Colonic mucosa (tissue), 4 donors: ENCODE measurements at regions of chr5 and their contacts with region 1.

Region 1: DNA sequence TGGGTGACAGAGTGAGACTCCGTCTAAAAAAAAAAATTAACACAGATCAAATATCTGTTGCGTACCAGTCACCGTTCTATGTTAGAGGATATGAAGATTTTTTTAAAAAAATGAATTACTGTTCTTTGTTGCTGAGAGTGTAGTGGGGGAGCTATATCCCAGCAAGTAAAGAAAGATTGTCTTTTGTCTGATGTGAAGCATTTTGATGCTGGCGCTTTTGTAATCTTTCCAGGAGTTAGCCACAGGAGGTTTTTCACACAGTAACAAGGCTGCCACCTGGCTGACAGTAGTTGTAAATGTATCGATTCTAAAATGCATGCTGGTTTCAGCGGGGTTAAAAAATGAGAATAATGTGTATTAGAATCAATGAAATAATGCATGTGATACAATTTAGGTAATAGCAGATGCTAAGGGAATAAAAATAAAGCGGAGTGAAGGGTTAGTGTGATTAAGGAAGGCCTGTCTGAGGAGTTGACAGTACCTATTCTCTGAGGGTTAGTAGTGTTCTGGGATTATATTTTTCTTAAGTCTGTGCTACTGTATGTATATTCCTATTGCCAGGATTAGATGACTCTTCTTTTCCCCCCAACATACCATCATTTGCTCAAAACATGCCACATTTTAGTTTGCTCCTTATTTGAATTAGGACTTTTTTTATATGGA is 3.4 kb downstream of the LMNB1 start:
- DNase-seq: peak; percentile 47
- H3K4me3 ChIP-seq: no peak overlapping the region
- H3K27ac ChIP-seq: no peak overlapping the region
- H3K4me1 ChIP-seq: no peaks in the 10 kb centered on the region
- H3K27me3 ChIP-seq: no peaks in the 10 kb centered on the region
- CTCF ChIP-seq: peak; percentile 70

Region 2: GRCh38 chr5:126656396-126657007 is 123.8 kb before region 1 on chr5:
- intact Hi-C with region 1: loop called (anchors 5 kb)
- DNase-seq: no peak
- H3K4me3 ChIP-seq: no peak overlapping the region
- H3K27ac ChIP-seq: no peak overlapping the region
- H3K4me1 ChIP-seq: no peaks in the 10 kb centered on the region
- H3K27me3 ChIP-seq: no peaks in the 10 kb centered on the region
- CTCF ChIP-seq: peak; percentile 85

Region 3: GRCh38 chr5:126676195-126676624 is 104.1 kb before region 1 on chr5:
- intact Hi-C with region 1: loop called (anchors 5 kb)
- DNase-seq: peak; percentile 80
- H3K4me3 ChIP-seq: no peak overlapping the region
- H3K27ac ChIP-seq: no peak overlapping the region
- H3K4me1 ChIP-seq: peaks cover 9% of the 10 kb centered on the region
- H3K27me3 ChIP-seq: no peaks in the 10 kb centered on the region
- CTCF ChIP-seq: peak; percentile 64